A549 (cell line): ENCODE measurements at regions of chr1 and their contacts with region 1.

Region 1: GRCh38 chr1:51296383-51297357 is 33.7 kb downstream of the TTC39A start:
- DNase-seq: peak; percentile 69 to 75
- ATAC-seq: peak; percentile 83 to 92
- H3K4me3 ChIP-seq: peak overlapping the region; percentile 27; the same call in 1 of the 3 replicates
- H3K27ac ChIP-seq: peak overlapping the region; percentile 71 to 83
- H3K4me1 ChIP-seq: peaks cover 3% of the 10 kb centered on the region; the same call in 1 of the 3 replicates
- CTCF ChIP-seq: peak; percentile 72
- EP300 ChIP-seq: no peak
- POLR2A ChIP-seq: no peak
- RAD21 ChIP-seq: peak; percentile 70

Region 2: GRCh38 chr1:51313961-51314777 is 17.5 kb after region 1 on chr1:
- CTCF ChIA-PET with region 1: interaction called, 11 read pairs
- POLR2A ChIA-PET with region 1: no interaction called
- DNase-seq: peak; percentile 32 to 53
- ATAC-seq: peak; percentile 58 to 69
- H3K4me3 ChIP-seq: no peak overlapping the region
- H3K27ac ChIP-seq: peak overlapping the region; percentile 81 to 87
- H3K4me1 ChIP-seq: peaks cover 31% of the 10 kb centered on the region
- CTCF ChIP-seq: no peak
- EP300 ChIP-seq: no peak
- POLR2A ChIP-seq: no peak
- RAD21 ChIP-seq: no peak